ENCODE measurements at regions of chr18 and their contacts with region 1.

Region 1: DNA sequence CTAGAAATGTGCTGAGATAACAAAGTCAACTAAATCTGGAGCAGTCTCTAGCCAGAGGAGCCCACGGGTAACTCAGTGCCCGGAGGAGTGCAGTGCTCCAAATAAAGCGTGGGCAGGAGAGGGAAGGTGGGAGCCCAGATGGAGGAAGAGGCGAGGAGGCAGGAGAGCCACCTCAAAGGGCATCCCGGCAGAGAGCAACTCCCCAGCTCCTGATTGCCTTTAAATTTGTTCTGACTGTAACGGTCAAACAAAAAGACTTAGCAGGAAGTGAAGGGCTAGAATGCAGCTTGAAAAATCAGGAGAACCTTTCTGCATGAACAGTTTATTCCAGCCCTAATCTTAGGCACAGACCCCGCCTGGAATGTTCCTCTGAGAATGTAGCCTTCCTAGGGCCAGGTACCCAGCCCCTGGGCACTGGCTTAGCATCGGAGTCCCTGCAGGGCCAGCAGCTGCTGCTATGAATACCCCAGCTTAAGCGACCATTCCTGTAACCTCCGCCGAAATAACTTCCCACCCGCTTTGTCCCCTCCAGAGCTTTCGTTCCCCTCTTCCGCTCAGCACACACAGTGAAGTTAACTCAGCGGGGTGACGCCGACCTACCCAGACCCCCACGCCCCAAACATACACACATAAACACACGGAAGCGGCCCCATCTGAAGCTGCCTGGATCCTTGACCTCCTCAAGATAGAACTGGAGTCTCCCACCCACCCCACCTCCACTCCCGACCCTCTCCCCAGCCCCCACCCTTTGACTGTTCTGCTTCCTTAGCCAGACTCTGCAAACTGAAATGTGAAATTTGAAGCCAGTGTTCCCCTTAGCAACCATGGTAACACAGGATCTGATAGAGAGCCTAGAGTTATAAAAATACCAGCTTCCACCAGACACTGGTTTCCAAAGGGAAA is 123.2 kb downstream of the SMAD7 start:
- DNase-seq: no peak
- H3K4me3 ChIP-seq: peak overlapping the region; percentile 7 to 13
- H3K27ac ChIP-seq: peak overlapping the region; percentile 54 to 61
- H3K4me1 ChIP-seq: peaks cover 12% of the 10 kb centered on the region
- H3K27me3 ChIP-seq: no peaks in the 10 kb centered on the region
- CTCF ChIP-seq: no peak
- POLR2A ChIP-seq: no peak

Region 2: GRCh38 chr18:48889115-48889941 is 61.8 kb after region 1 on chr18:
- intact Hi-C with region 1: loop called (anchors 5 kb)
- DNase-seq: no peak
- H3K4me3 ChIP-seq: no peak overlapping the region
- H3K27ac ChIP-seq: no peak overlapping the region
- H3K4me1 ChIP-seq: peaks cover 23% of the 10 kb centered on the region
- H3K27me3 ChIP-seq: no peaks in the 10 kb centered on the region
- CTCF ChIP-seq: no peak
- POLR2A ChIP-seq: no peak

Region 3: GRCh38 chr18:48902023-48902855 is 74.7 kb after region 1 on chr18:
- intact Hi-C with region 1: no loop called
- DNase-seq: peak; percentile 56
- H3K4me3 ChIP-seq: no peak overlapping the region
- H3K27ac ChIP-seq: peak overlapping the region; percentile 28 to 63
- H3K4me1 ChIP-seq: no peaks in the 10 kb centered on the region
- H3K27me3 ChIP-seq: no peaks in the 10 kb centered on the region
- CTCF ChIP-seq: no peak
- POLR2A ChIP-seq: no peak

Region 4: GRCh38 chr18:48951448-48952286 is 124.1 kb after region 1 on chr18:
- intact Hi-C with region 1: loop called (anchors 5 kb)
- DNase-seq: peak; percentile 85
- H3K4me3 ChIP-seq: peak overlapping the region; percentile 70 to 93
- H3K27ac ChIP-seq: peak overlapping the region; percentile 98 to 99
- H3K4me1 ChIP-seq: peaks cover 3% of the 10 kb centered on the region
- H3K27me3 ChIP-seq: no peaks in the 10 kb centered on the region
- CTCF ChIP-seq: peak in 2 of 4 experiments; percentile 35 to 36
- POLR2A ChIP-seq: peak; percentile 89

Measured in prostate gland (tissue), 2 donors.